ENCODE measurements at regions of chr12 and their contacts with region 1.

Region 1: GRCh38 chr12:109736552-109737108 is 23.0 kb downstream of the FAM222A start:
- DNase-seq: peak in 1 of 2 experiments; percentile 87
- H3K4me3 ChIP-seq: no peak overlapping the region
- H3K27ac ChIP-seq: no peak overlapping the region
- H3K4me1 ChIP-seq: peaks cover 5 to 11% (median 7%) of the 10 kb centered on the region in 4 experiments; a peak in 6 of 7 replicates
- H3K27me3 ChIP-seq: peaks cover 0 to 16% (median 9%) of the 10 kb centered on the region in 4 experiments; a peak in 4 of 7 replicates
- CTCF ChIP-seq: no peak
- EP300 ChIP-seq: no peak
- POLR2A ChIP-seq: no peak
- RAD21 ChIP-seq: 0 out of 4 replicates have a peak, but pooled peaks of 1 of the 2 experiments have one; percentile 6

Region 2: GRCh38 chr12:109606320-109607028 is 130.2 kb before region 1 on chr12:
- CTCF ChIA-PET with region 1: interaction called, 13 read pairs
- POLR2A ChIA-PET with region 1: no interaction called
- DNase-seq: peak in 1 of 2 experiments; percentile 68
- H3K4me3 ChIP-seq: peak overlapping the region in 1 of 4 experiments; percentile 20; a peak in 1 of 8 replicates
- H3K27ac ChIP-seq: no peak overlapping the region
- H3K4me1 ChIP-seq: peaks cover 0 to 4% (median 1%) of the 10 kb centered on the region in 4 experiments; a peak in 5 of 7 replicates
- H3K27me3 ChIP-seq: 0 out of 7 replicates have a peak, but pooled peaks cover 0 to 2% (median 0%) of the 10 kb centered on the region in 4 experiments
- CTCF ChIP-seq: no peak
- EP300 ChIP-seq: peak in 1 of 2 experiments; percentile 7; a peak in 1 of 3 replicates
- POLR2A ChIP-seq: no peak
- RAD21 ChIP-seq: no peak

Region 3: GRCh38 chr12:109719236-109720022 is 17.2 kb before region 1 on chr12:
- CTCF ChIA-PET with region 1: interaction called, 47 read pairs
- POLR2A ChIA-PET with region 1: interaction called, 7 read pairs
- DNase-seq: no peak
- H3K4me3 ChIP-seq: no peak overlapping the region
- H3K27ac ChIP-seq: 0 out of 2 replicates have a peak overlapping the region, but pooled peaks have one; percentile 14
- H3K4me1 ChIP-seq: peaks cover 0 to 33% (median 15%) of the 10 kb centered on the region in 4 experiments; a peak in 6 of 7 replicates
- H3K27me3 ChIP-seq: peaks cover 4 to 40% (median 39%) of the 10 kb centered on the region in 4 experiments
- CTCF ChIP-seq: peak in 2 of 3 experiments; percentile 51 to 62; a peak in 3 of 4 replicates
- EP300 ChIP-seq: no peak
- POLR2A ChIP-seq: no peak
- RAD21 ChIP-seq: peak; percentile 30 to 57; a peak in 2 of 4 replicates

Region 4: DNA sequence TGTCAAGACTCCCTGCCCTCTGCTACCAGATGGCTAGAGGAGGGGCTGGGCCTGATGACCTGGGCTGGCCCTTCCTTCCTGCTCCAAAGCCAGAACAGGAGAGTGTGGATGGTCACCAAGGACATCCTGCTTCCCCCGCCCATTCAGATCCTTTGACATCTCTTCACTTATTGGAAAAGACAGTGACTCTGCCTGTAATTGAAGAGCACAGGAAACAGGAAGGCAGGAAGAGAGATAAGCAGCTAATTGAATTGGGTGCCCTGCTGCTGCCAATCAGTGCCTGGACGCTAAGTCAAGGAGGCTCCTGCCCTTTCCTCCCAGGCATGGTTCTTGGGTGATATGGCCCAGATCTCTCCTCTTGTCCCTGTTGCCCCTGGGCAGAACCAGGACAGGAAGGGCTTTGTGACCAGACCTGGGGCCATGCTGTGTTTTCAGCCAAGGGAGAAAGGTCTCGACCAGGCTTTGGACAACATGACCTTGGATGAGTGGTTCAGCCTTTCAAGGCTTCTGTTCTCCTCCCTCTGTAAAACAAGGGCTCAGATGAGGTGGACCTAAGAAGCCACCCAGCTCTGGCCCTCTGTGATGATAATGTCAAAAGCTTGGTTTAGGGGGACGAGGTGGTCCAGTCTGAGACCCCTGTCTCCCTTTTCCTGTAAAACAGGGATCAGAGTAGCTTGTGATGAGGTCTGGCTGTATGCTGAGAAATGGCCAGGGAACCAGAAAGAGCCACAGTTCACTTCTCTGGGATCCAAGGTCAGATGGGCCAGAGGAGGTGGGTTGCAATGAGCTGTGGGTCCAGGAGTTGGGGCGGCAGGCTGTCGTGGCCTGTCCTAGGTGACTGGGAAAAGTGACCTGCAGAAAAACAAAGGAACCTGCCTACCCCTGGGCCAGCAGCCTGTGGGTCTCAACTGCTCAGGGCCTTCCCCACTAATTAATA is 15.8 kb after region 1 on chr12:
- CTCF ChIA-PET with region 1: interaction called, 19 read pairs
- POLR2A ChIA-PET with region 1: interaction called, 5 read pairs
- DNase-seq: no peak
- H3K4me3 ChIP-seq: no peak overlapping the region
- H3K27ac ChIP-seq: no peak overlapping the region
- H3K4me1 ChIP-seq: no peaks in the 10 kb centered on the region; a peak in 1 of 7 replicates
- H3K27me3 ChIP-seq: no peaks in the 10 kb centered on the region
- CTCF ChIP-seq: no peak
- EP300 ChIP-seq: no peak
- POLR2A ChIP-seq: no peak
- RAD21 ChIP-seq: no peak

Region 5: DNA sequence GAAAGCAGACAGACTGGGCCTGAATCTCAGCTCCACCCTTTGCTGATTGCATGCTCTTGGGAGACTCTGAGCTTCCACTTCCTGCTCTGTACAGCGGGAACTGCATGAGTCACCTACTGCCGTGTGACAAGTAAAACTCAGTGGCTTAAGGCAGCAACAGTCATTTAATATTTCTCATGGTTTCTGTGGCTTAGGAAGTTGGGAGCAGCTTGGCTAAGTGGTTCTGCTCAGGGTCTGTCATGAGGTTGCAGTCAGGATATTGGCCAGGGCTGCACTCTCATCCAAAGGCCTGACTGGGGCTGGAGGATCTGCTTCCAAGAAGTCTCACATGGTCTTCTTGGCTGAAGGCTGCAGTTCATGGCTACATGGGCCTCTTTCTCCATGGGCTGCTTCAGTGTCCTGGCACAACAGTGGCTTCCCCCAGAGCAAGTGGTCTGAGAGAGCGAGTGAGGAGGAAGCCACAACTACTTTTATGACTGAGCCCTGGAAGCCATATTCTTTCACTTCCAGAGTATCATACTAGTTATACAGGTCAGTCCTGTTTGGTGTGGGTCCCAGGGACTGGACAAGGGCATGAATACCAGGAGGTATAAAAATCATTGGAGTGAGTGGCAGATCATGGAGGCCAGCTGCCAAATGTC is 26.7 kb after region 1 on chr12:
- CTCF ChIA-PET with region 1: interaction called, 11 read pairs
- POLR2A ChIA-PET with region 1: no interaction called
- DNase-seq: peak in 1 of 2 experiments; percentile 35
- H3K4me3 ChIP-seq: no peak overlapping the region
- H3K27ac ChIP-seq: no peak overlapping the region
- H3K4me1 ChIP-seq: peaks cover 0 to 10% (median 4%) of the 10 kb centered on the region in 4 experiments; a peak in 6 of 7 replicates
- H3K27me3 ChIP-seq: no peaks in the 10 kb centered on the region
- CTCF ChIP-seq: no peak
- EP300 ChIP-seq: no peak
- POLR2A ChIP-seq: no peak
- RAD21 ChIP-seq: no peak